Panc1 (cell line): ENCODE measurements at regions of chr10 and their contacts with region 1.

Region 1: DNA sequence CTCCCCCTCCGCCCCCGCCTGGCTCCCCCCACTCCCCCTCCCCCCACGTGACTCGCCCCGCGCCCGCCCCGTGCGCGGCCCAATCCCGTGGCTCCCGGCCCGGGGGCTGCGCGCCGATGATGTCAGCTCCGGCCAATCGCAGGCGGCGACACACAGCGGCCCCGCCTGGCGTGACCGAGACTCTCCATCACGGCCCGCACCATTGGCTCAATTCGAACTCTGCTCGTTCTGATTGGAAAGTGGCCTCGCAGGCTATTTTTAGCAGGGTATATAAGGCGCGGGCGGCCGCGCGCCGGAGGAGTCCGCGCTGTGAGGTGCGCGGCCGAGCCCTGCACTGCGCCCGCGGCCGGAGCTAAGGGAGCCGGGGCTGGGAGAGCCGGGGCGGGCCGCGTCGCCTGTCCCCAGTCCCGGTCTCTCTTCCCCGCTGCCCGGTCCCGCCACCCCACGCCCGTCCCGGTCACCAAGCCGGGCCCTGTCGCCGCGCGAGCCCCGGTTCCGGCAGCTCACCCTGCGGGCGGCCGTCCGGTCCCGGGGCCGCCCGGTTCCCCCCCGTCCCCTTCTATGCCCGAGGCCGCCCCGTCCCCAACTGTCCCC is 345 bp upstream of the KLF6 start:
- DNase-seq: peak; percentile 73
- ATAC-seq: peak; percentile 62
- H3K4me3 ChIP-seq: peak overlapping the region; percentile 65 to 96
- H3K27ac ChIP-seq: peak overlapping the region; percentile 98
- H3K4me1 ChIP-seq: peaks cover 10% of the 10 kb centered on the region
- H3K27me3 ChIP-seq: no peaks in the 10 kb centered on the region
- CTCF ChIP-seq: no peak

Region 2: DNA sequence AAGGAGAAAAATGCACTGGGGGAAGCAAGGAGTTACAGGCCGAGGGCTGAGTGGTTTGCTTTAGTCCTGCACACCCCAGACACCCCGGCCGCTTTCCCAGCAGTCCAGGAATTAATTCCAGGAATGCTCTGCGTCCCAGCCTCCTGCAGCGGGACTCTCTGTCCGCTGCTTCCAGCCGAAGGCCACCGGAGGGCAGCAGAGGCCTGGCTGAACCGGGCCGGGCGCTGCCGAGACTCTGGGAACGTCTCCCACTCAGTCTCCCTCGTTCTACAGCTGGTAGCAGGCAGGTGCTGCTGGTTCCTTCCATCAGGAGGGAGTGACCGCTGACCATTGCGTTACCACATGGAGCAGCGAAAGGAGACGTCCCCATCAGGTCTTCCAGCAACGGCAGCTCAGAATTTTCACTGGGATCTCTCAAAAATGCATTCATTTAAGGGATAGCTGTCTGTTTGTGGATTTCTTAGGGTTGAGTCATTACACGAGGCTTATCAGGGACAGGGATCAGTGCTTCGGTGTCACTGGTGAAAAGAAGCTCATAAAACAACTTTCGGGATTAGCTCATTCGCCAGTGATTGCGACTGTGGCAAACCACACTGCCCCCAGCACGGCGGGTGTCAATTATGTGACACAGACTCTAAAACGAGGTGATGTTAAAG is 587.9 kb before region 1 on chr10:
- CTCF ChIA-PET with region 1: no interaction called
- POLR2A ChIA-PET with region 1: no interaction called
- in situ Hi-C with region 1: no loop called
- intact Hi-C with region 1: loop called (anchors 5 kb)
- DNase-seq: peak; percentile 68
- ATAC-seq: peak; percentile 97
- H3K4me3 ChIP-seq: peak overlapping the region in 1 of 2 experiments; percentile 31; a peak in 3 of 4 replicates
- H3K27ac ChIP-seq: peak overlapping the region; percentile 80
- H3K4me1 ChIP-seq: peaks cover 13% of the 10 kb centered on the region
- H3K27me3 ChIP-seq: no peaks in the 10 kb centered on the region
- CTCF ChIP-seq: peak; percentile 89

Region 3: GRCh38 chr10:3805791-3806461 is 20.6 kb after region 1 on chr10:
- CTCF ChIA-PET with region 1: no interaction called
- POLR2A ChIA-PET with region 1: interaction called, 9 read pairs
- in situ Hi-C with region 1: no loop called
- intact Hi-C with region 1: loop called (anchors 2 kb)
- DNase-seq: no peak
- ATAC-seq: peak; percentile 29
- H3K4me3 ChIP-seq: peak overlapping the region in 1 of 2 experiments; percentile 24; a peak in 2 of 4 replicates
- H3K27ac ChIP-seq: peak overlapping the region; percentile 87
- H3K4me1 ChIP-seq: peaks cover 75% of the 10 kb centered on the region
- H3K27me3 ChIP-seq: no peaks in the 10 kb centered on the region
- CTCF ChIP-seq: no peak

Region 4: DNA sequence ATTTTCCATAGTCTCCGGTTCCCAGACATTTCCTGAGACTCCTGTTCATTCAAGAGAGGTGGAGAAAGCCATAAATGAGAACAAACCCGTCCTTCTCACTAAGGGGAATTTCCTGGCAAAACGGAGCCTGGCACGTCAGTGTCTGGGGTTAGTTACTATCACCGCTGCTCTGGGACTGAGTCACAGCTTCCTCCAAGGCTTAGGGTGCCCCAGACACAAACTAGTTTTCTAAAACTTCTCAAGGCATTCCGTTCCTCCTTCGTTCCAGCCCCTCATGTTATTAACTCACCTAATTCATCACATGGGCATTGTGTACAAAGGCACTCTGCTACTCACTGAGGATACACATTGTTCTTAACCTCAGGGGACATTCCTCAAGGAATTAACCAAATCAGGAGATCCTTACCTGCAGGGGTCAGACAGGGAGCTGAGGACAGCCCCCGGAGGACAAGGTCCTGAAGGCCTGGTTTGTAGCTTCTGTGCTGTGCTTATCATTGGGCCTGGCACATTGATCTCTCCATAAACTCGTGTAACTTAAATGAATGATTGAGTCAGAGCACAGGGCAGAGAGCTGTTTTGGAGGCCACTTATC is 102.6 kb after region 1 on chr10:
- CTCF ChIA-PET with region 1: no interaction called
- POLR2A ChIA-PET with region 1: interaction called, 5 read pairs
- in situ Hi-C with region 1: no loop called
- intact Hi-C with region 1: loop called (anchors 5 kb)
- DNase-seq: no peak
- ATAC-seq: peak; percentile 68
- H3K4me3 ChIP-seq: no peak overlapping the region
- H3K27ac ChIP-seq: peak overlapping the region; percentile 100
- H3K4me1 ChIP-seq: peaks cover 55% of the 10 kb centered on the region
- H3K27me3 ChIP-seq: no peaks in the 10 kb centered on the region
- CTCF ChIP-seq: no peak

Region 5: DNA sequence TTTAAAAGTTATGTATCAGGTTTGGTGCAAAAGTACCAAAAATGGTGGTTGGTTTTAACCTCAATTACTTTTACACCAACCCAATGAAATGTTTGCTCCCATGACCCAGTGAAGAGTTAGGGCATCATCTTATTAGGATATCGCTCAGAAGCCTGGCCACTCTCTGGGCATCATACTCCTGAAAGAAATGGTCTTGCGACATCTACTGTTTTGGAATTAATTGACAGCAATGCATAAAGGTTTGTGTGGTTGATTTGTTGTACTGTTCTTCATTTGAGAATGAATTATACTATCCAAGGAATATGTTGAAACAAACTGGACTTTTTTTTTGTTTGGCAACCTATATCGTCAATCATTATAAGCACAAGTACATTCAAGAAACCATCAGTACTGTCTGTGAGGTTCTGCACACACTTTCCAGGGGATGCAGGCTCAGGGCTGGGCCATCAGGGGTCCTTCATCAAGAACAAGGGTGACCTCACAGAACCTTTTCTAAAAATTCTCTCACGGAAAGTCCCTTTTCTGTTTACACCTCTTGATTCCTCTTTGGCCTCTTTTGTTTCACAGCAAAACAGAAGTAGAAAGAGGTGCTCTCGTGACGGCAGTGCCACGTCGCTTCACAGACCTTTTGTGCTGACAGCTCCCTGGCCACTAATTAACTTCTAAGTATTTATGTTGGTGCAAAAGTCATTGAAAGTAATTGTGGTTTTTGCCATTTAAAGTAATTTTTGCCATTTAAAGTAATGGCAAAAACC is 116.9 kb after region 1 on chr10:
- CTCF ChIA-PET with region 1: no interaction called
- POLR2A ChIA-PET with region 1: interaction called, 11 read pairs
- in situ Hi-C with region 1: no loop called
- intact Hi-C with region 1: no loop called
- DNase-seq: no peak
- ATAC-seq: peak; percentile 57
- H3K4me3 ChIP-seq: no peak overlapping the region
- H3K27ac ChIP-seq: peak overlapping the region; percentile 99
- H3K4me1 ChIP-seq: peaks cover 44% of the 10 kb centered on the region
- H3K27me3 ChIP-seq: no peaks in the 10 kb centered on the region
- CTCF ChIP-seq: no peak; the same call in 1 of the 2 replicates

Region 6: GRCh38 chr10:4067531-4067930 is 282.2 kb after region 1 on chr10:
- CTCF ChIA-PET with region 1: no interaction called
- POLR2A ChIA-PET with region 1: no interaction called
- in situ Hi-C with region 1: no loop called
- intact Hi-C with region 1: no loop called
- DNase-seq: no peak
- ATAC-seq: no peak
- H3K4me3 ChIP-seq: no peak overlapping the region
- H3K27ac ChIP-seq: peak overlapping the region; percentile 74; the same call in 1 of the 2 replicates
- H3K4me1 ChIP-seq: peaks cover 13% of the 10 kb centered on the region
- H3K27me3 ChIP-seq: no peaks in the 10 kb centered on the region
- CTCF ChIP-seq: no peak

Region 7: GRCh38 chr10:4353964-4354363 is 568.6 kb after region 1 on chr10:
- CTCF ChIA-PET with region 1: no interaction called
- POLR2A ChIA-PET with region 1: interaction called, 3 read pairs
- in situ Hi-C with region 1: no loop called
- intact Hi-C with region 1: loop called (anchors 10 kb)
- DNase-seq: peak; percentile 77
- ATAC-seq: peak; percentile 83
- H3K4me3 ChIP-seq: no peak overlapping the region
- H3K27ac ChIP-seq: peak overlapping the region; percentile 96
- H3K4me1 ChIP-seq: peaks cover 24% of the 10 kb centered on the region
- H3K27me3 ChIP-seq: no peaks in the 10 kb centered on the region
- CTCF ChIP-seq: no peak